ENCODE measurements at regions of chr14 and their contacts with region 1.

Region 1: DNA sequence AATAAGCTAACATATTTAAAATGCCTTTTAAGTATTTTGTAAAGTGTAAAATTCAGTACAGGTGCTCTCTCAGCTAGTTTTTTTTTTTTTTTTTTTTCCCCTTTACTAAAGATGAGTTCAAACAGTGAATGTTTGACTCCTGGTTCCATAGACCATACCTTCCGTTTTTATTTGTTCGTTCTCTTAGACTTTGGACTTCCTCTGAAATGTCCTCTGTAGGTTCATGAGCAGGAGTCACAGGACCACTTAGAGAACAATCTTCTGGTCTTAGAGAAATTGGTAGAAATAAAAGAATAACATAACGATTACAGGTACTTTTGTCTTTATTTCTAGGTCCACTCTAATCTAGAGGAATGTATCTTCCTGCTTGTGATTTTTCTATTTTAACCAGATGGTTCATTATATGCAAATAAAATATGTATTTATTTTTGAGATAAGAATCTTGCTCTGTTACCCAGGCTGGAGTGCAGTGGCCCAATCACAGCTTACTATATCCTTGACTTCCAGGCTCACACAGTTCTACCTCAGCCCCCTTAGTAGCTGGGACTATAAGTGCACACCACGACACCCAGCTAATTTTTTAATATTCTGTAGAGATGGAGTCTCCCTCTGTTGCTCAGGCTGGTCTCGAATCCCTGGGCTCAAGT is 25.8 kb downstream of the STYX start:
- DNase-seq: no peak
- ATAC-seq: no peak
- H3K4me3 ChIP-seq: no peak overlapping the region
- H3K4me3 Mint-ChIP-seq: no peak overlapping the region
- H3K27ac ChIP-seq: no peak overlapping the region
- H3K27ac Mint-ChIP-seq: peak overlapping the region in 2 of 9 donors; percentile 28 to 42
- H3K4me1 ChIP-seq: no peaks in the 10 kb centered on the region
- H3K4me1 Mint-ChIP-seq: peaks cover 0 to 11% (median 0%) of the 10 kb centered on the region in 7 donors
- H3K27me3 ChIP-seq: no peaks in the 10 kb centered on the region
- H3K27me3 Mint-ChIP-seq: no peaks in the 10 kb centered on the region

Region 2: DNA sequence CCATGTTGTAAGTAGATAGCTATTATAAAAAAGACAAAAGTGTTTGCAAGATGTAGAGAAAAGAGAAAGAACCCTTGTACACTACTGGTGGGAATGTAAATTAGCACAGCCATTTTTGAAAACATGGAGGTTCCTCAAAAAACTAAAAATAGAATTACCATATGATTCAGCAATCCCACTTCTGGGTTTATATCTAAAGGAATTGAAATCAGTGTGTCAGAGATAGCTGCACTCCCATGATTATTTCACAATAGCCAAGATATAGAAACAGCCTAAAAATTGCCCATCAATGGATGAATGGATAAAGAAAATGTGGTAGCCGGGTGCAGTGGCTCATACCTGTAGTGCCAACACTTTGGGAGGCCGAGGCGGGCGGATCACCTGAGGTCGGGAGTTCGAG is 39.6 kb before region 1 on chr14:
- CTCF ChIA-PET with region 1: no interaction called
- POLR2A ChIA-PET with region 1: no interaction called
- intact Hi-C with region 1: no loop called
- DNase-seq: no peak
- ATAC-seq: peak; percentile 32
- H3K4me3 ChIP-seq: no peak overlapping the region
- H3K4me3 Mint-ChIP-seq: no peak overlapping the region
- H3K27ac ChIP-seq: no peak overlapping the region
- H3K27ac Mint-ChIP-seq: peak overlapping the region in 3 of 9 donors; percentile 22 to 47 (median 36)
- H3K4me1 ChIP-seq: no peaks in the 10 kb centered on the region
- H3K4me1 Mint-ChIP-seq: peaks cover under 1 to 14% (median 7%) of the 10 kb centered on the region in 7 donors
- H3K27me3 ChIP-seq: no peaks in the 10 kb centered on the region
- H3K27me3 Mint-ChIP-seq: no peaks in the 10 kb centered on the region

Region 3: GRCh38 chr14:52741865-52742264 is 13.9 kb before region 1 on chr14:
- CTCF ChIA-PET with region 1: interaction called, 4 read pairs
- POLR2A ChIA-PET with region 1: interaction called, 8 read pairs
- intact Hi-C with region 1: loop called in 1 of 2 experiments (anchors 1 kb)
- DNase-seq: peak in 7 of 9 donors; percentile 13 to 52 (median 40)
- ATAC-seq: peak; percentile 60
- H3K4me3 ChIP-seq: peak overlapping the region; percentile 54
- H3K4me3 Mint-ChIP-seq: peak overlapping the region; percentile 75 to 93 (median 84)
- H3K27ac ChIP-seq: peak overlapping the region; percentile 68
- H3K27ac Mint-ChIP-seq: peak overlapping the region; percentile 92 to 100 (median 96)
- H3K4me1 ChIP-seq: peaks cover 48 to 64% of the 10 kb centered on the region in 2 donors
- H3K4me1 Mint-ChIP-seq: peaks cover 42 to 90% (median 74%) of the 10 kb centered on the region in 7 donors
- H3K27me3 ChIP-seq: no peaks in the 10 kb centered on the region
- H3K27me3 Mint-ChIP-seq: no peaks in the 10 kb centered on the region

Region 4: GRCh38 chr14:52767058-52767833 is 11.5 kb after region 1 on chr14:
- CTCF ChIA-PET with region 1: interaction called, 3 read pairs
- POLR2A ChIA-PET with region 1: interaction called, 3 read pairs
- intact Hi-C with region 1: loop called in 1 of 2 experiments (anchors 1 kb)
- DNase-seq: no peak
- ATAC-seq: no peak
- H3K4me3 ChIP-seq: no peak overlapping the region
- H3K4me3 Mint-ChIP-seq: no peak overlapping the region
- H3K27ac ChIP-seq: no peak overlapping the region
- H3K27ac Mint-ChIP-seq: peak overlapping the region in 7 of 9 donors; percentile 2 to 66 (median 36)
- H3K4me1 ChIP-seq: no peaks in the 10 kb centered on the region
- H3K4me1 Mint-ChIP-seq: peaks cover 18 to 42% (median 32%) of the 10 kb centered on the region in 7 donors
- H3K27me3 ChIP-seq: no peaks in the 10 kb centered on the region
- H3K27me3 Mint-ChIP-seq: no peaks in the 10 kb centered on the region

Region 5: DNA sequence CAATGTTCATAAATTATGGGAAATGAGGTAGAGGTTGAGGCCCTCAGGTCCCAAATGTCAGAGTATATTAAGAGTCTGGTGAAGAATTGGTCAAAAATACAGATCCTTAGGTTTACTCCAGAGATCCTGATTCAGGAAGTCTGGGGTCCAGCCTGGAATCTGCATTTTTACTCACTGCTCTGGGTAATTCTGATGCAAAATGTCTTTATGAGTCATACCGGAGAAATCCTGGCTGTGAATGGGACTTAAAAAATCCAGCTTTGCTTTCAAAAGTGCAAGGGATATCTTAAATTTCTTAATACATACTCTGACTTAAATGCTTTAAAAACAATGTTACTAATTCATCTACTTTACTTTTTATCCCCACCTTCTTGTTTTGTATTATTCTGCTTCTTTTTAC is 120.6 kb after region 1 on chr14:
- CTCF ChIA-PET with region 1: no interaction called
- POLR2A ChIA-PET with region 1: no interaction called
- intact Hi-C with region 1: no loop called
- DNase-seq: no peak
- ATAC-seq: no peak
- H3K4me3 ChIP-seq: no peak overlapping the region
- H3K4me3 Mint-ChIP-seq: no peak overlapping the region
- H3K27ac ChIP-seq: no peak overlapping the region
- H3K27ac Mint-ChIP-seq: no peak overlapping the region
- H3K4me1 ChIP-seq: no peaks in the 10 kb centered on the region
- H3K4me1 Mint-ChIP-seq: no peaks in the 10 kb centered on the region
- H3K27me3 ChIP-seq: no peaks in the 10 kb centered on the region
- H3K27me3 Mint-ChIP-seq: peaks cover 0 to 6% (median 0%) of the 10 kb centered on the region in 5 donors

Measured in naive thymus-derived CD4-positive, alpha-beta T cell (primary cell).